Activated CD8-positive, alpha-beta T cell treated with anti-CD3 and anti-CD28 coated beads for 36 hours (primary cell): ENCODE measurements at regions of chr17 and their contacts with region 1.

Region 1: DNA sequence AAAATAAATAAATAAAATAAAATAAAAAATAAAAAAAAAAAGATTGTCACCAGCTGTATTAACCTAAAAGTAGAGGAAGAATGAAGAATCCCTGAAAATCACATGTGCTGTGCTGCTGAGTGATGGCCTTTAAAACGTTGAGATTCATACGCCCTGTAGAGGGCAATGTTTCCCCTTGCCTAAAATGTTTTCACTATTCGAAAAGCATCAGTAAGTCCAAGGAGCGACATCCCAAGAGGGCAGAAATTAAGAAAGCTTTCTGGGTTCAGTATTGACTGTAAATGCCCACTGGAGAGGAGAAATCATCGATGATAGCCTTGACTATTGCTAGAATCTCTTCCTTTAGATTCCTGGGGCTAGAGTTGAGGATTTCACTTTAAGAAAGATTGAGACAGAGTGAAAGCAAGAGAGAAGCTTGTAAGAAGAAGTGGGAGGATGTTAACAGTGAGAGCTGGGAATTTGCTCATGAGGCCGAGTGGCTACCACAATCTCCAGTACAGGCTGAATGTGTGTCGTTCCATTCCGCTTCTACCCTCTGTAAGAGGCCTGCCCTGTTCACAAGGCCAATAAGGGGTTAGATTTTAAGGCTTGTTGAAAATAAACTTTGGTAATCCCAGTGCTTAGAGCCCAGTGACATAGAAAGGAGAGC is 170.8 kb upstream of the FAM20A start:
- DNase-seq: peak; percentile 5
- ATAC-seq: peak; percentile 42
- H3K4me3 Mint-ChIP-seq: no peak overlapping the region
- H3K27ac Mint-ChIP-seq: no peak overlapping the region
- H3K4me1 Mint-ChIP-seq: peaks cover 4% of the 10 kb centered on the region
- H3K27me3 Mint-ChIP-seq: no peaks in the 10 kb centered on the region
- CTCF ChIP-seq: peak; percentile 54

Region 2: DNA sequence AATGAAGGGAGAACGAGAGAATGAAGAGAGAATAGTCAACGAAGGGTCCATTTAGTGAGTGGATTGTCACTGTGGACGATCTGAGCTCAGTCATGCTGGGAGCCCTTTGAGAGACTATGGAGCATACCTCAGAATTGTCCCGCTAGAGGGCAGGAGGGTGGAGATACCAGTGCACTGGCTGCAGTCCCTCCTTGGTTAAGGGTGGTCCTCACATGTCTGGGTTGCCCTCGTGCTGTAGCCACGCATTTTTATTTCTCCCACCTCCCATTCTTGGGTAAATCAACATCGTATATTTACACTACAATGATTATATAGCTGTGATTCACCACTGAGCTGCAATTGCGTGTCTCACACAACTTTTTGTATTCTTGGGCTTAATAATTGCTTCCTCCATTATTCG is 137.6 kb before region 1 on chr17:
- CTCF ChIA-PET with region 1: no interaction called
- POLR2A ChIA-PET with region 1: no interaction called
- intact Hi-C with region 1: no loop called
- DNase-seq: no peak
- ATAC-seq: no peak
- H3K4me3 Mint-ChIP-seq: no peak overlapping the region
- H3K27ac Mint-ChIP-seq: no peak overlapping the region
- H3K4me1 Mint-ChIP-seq: no peaks in the 10 kb centered on the region
- H3K27me3 Mint-ChIP-seq: peaks cover 7% of the 10 kb centered on the region
- CTCF ChIP-seq: no peak

Region 3: GRCh38 chr17:68972119-68972704 is 200.2 kb after region 1 on chr17:
- CTCF ChIA-PET with region 1: no interaction called
- POLR2A ChIA-PET with region 1: no interaction called
- intact Hi-C with region 1: loop called (anchors 10 kb)
- DNase-seq: no peak
- ATAC-seq: no peak
- H3K4me3 Mint-ChIP-seq: no peak overlapping the region
- H3K27ac Mint-ChIP-seq: no peak overlapping the region
- H3K4me1 Mint-ChIP-seq: no peaks in the 10 kb centered on the region
- H3K27me3 Mint-ChIP-seq: peaks cover 8% of the 10 kb centered on the region
- CTCF ChIP-seq: peak; percentile 49

Region 4: GRCh38 chr17:69246726-69247375 is 474.9 kb after region 1 on chr17:
- CTCF ChIA-PET with region 1: interaction called, 32 read pairs
- POLR2A ChIA-PET with region 1: no interaction called
- intact Hi-C with region 1: no loop called
- DNase-seq: no peak
- ATAC-seq: peak; percentile 42
- H3K4me3 Mint-ChIP-seq: no peak overlapping the region
- H3K27ac Mint-ChIP-seq: no peak overlapping the region
- H3K4me1 Mint-ChIP-seq: no peaks in the 10 kb centered on the region
- H3K27me3 Mint-ChIP-seq: no peaks in the 10 kb centered on the region
- CTCF ChIP-seq: peak; percentile 75